GM12878 (cell line): ENCODE measurements at regions of chr6 and their contacts with region 1.

Region 1: GRCh38 chr6:15420959-15421438 is 175.1 kb downstream of the JARID2 start:
- DNase-seq: no peak
- ATAC-seq: peak; percentile 88
- H3K4me3 ChIP-seq: peak overlapping the region; percentile 59
- H3K27ac ChIP-seq: peak overlapping the region; percentile 90
- H3K4me1 ChIP-seq: peaks cover 29% of the 10 kb centered on the region
- H3K27me3 ChIP-seq: no peaks in the 10 kb centered on the region
- CTCF ChIP-seq: no peak
- EP300 ChIP-seq: 0 out of 4 replicates have a peak, but pooled peaks of 1 of the 2 experiments have one; percentile 9
- POLR2A ChIP-seq: no peak
- RAD21 ChIP-seq: no peak

Region 2: DNA sequence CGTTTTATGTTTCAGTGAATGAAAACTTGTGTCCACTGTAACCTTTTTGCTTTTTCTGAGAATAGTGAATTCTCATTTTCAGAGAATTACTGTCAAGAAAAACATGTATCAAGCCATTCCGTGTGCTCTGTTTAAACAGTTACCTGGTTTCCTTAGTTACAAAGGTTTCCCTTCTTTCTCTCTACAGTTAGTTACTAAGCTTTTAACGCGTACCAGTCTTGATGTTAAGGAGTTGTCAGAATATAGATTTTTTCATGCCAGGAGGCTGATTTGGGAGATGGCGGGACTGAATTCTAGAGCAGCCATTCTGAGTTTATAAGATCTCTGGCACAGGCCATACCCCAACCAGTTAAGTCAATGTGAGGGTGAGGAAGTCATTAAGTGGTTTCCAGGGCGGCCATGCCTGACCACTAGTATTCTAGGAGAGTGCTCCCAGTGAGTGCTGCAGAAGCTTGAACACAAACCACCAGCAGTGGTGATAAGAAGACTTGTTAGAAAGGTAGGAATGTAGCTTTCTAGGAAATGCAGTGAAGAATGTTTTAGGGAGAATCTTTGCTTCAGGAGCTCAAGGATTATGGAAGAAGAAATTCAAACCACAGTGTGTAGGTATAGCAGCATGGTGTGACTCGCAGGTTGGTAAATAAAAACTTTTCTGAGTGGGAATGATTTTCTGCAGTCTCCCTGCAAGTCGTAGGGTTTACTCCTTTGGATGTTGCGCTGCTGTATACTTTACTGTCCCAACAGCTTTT is 62.2 kb before region 1 on chr6:
- CTCF ChIA-PET with region 1: no interaction called
- POLR2A ChIA-PET with region 1: interaction called, 9 read pairs
- RAD21 ChIA-PET with region 1: interaction called, 14 read pairs
- SMC1A ChIA-PET with region 1: interaction called, 11 read pairs
- in situ Hi-C with region 1: no loop called
- intact Hi-C with region 1: no loop called
- DNase-seq: peak; percentile 75
- ATAC-seq: peak; percentile 80
- H3K4me3 ChIP-seq: peak overlapping the region; percentile 27
- H3K27ac ChIP-seq: peak overlapping the region; percentile 81
- H3K4me1 ChIP-seq: peaks cover 75% of the 10 kb centered on the region
- H3K27me3 ChIP-seq: no peaks in the 10 kb centered on the region
- CTCF ChIP-seq: no peak
- EP300 ChIP-seq: no peak; a peak in 1 of 4 replicates
- POLR2A ChIP-seq: no peak
- RAD21 ChIP-seq: no peak

Region 3: GRCh38 chr6:15399641-15400470 is 21.1 kb before region 1 on chr6:
- CTCF ChIA-PET with region 1: interaction called, 4 read pairs
- POLR2A ChIA-PET with region 1: interaction called, 12 read pairs
- RAD21 ChIA-PET with region 1: interaction called, 17 read pairs
- SMC1A ChIA-PET with region 1: interaction called, 60 read pairs
- in situ Hi-C with region 1: no loop called
- intact Hi-C with region 1: no loop called
- DNase-seq: no peak
- ATAC-seq: no peak
- H3K4me3 ChIP-seq: peak overlapping the region; percentile 5; the same call in 1 of the 2 replicates
- H3K27ac ChIP-seq: no peak overlapping the region
- H3K4me1 ChIP-seq: peaks cover 23% of the 10 kb centered on the region
- H3K27me3 ChIP-seq: no peaks in the 10 kb centered on the region
- CTCF ChIP-seq: no peak
- EP300 ChIP-seq: no peak
- POLR2A ChIP-seq: no peak
- RAD21 ChIP-seq: no peak

Region 4: GRCh38 chr6:15405129-15406068 is 15.6 kb before region 1 on chr6:
- CTCF ChIA-PET with region 1: interaction called, 29 read pairs
- POLR2A ChIA-PET with region 1: interaction called, 55 read pairs
- RAD21 ChIA-PET with region 1: interaction called, 54 read pairs
- SMC1A ChIA-PET with region 1: interaction called, 136 read pairs
- in situ Hi-C with region 1: no loop called
- intact Hi-C with region 1: no loop called
- DNase-seq: no peak
- ATAC-seq: no peak
- H3K4me3 ChIP-seq: no peak overlapping the region
- H3K27ac ChIP-seq: no peak overlapping the region
- H3K4me1 ChIP-seq: peaks cover 28% of the 10 kb centered on the region
- H3K27me3 ChIP-seq: no peaks in the 10 kb centered on the region
- CTCF ChIP-seq: no peak
- EP300 ChIP-seq: no peak
- POLR2A ChIP-seq: no peak
- RAD21 ChIP-seq: no peak

Region 5: DNA sequence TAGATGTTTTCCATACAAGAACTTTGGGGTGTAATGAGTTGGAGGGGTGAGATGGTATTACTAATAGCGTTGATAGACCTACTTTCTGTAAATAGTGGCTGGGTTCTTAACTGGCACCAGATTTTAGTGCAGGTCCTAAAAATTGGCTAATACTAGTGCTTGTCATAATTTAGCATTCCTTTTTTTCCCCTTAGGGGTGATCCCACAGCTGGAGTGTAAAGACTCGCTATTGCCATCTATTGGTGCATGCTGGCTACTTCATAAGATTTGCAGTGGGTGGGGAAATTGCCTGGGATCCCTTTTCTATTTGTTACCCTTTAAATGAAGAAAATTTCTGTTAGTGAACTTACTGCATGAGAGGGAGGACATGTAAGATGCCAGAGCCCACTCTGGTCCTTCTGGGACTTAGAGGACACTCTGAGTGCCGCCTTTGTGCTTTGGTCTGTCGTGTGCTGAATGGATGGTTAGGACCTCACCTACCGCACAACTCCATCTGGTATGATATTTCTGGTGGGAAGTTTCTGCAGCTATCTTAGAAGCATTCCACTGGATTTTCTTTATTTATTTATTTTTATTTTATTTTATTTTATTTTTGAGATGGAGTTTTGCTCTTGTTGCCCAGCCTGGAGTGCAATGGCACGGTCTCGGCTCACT is 20.3 kb after region 1 on chr6:
- CTCF ChIA-PET with region 1: interaction called, 49 read pairs
- POLR2A ChIA-PET with region 1: interaction called, 8 read pairs
- RAD21 ChIA-PET with region 1: interaction called, 41 read pairs
- SMC1A ChIA-PET with region 1: interaction called, 59 read pairs
- in situ Hi-C with region 1: no loop called
- intact Hi-C with region 1: no loop called
- DNase-seq: no peak
- ATAC-seq: peak; percentile 74
- H3K4me3 ChIP-seq: no peak overlapping the region
- H3K27ac ChIP-seq: no peak overlapping the region
- H3K4me1 ChIP-seq: peaks cover 29% of the 10 kb centered on the region
- H3K27me3 ChIP-seq: no peaks in the 10 kb centered on the region
- CTCF ChIP-seq: peak; percentile 79 to 83 (median 79)
- EP300 ChIP-seq: no peak
- POLR2A ChIP-seq: no peak
- RAD21 ChIP-seq: peak; percentile 87

Region 6: GRCh38 chr6:15458021-15458459 is 37.0 kb after region 1 on chr6:
- CTCF ChIA-PET with region 1: interaction called, 4 read pairs
- POLR2A ChIA-PET with region 1: no interaction called
- RAD21 ChIA-PET with region 1: interaction called, 8 read pairs
- SMC1A ChIA-PET with region 1: interaction called, 11 read pairs
- in situ Hi-C with region 1: no loop called
- intact Hi-C with region 1: no loop called
- DNase-seq: peak; percentile 40
- ATAC-seq: peak; percentile 95
- H3K4me3 ChIP-seq: peak overlapping the region; percentile 9; the same call in 1 of the 2 replicates
- H3K27ac ChIP-seq: peak overlapping the region; percentile 37
- H3K4me1 ChIP-seq: peaks cover 17% of the 10 kb centered on the region
- H3K27me3 ChIP-seq: no peaks in the 10 kb centered on the region
- CTCF ChIP-seq: no peak
- EP300 ChIP-seq: 0 out of 4 replicates have a peak, but pooled peaks of 1 of the 2 experiments have one; percentile 35
- POLR2A ChIP-seq: no peak
- RAD21 ChIP-seq: no peak